Posterior cingulate gyrus (tissue), 11 donors: ENCODE measurements at regions of chr2 and their contacts with region 1.

Region 1: DNA sequence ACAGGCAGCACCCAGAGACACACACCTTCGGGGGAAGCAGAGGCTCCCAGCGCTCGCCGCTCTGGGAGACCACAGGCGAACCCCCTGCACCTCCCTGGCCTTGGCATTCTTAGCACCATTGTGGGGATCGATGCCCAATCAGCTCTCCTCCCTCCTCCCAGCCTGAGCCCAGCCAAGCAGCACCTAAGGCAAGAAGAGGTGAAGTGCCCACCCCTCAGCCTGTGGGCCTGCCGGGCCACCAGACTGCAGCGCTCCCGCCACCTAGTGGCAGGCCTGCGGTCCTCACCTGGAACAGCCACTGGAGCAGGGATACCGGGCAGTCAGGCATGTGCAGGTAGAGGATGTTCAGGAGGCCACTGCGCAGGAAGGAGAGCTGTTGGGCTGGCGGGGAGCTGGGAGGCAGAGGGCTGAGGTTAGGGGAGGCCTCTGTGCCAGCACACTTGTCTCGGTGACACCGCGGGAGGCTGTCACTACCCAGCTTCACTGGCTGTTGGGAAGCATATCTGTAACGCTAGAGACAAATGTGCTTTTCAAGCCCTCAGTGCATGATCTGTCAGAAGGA is 35.2 kb downstream of the FAM178B start:
- DNase-seq: peak; percentile 77 to 98 (median 88)

Region 2: DNA sequence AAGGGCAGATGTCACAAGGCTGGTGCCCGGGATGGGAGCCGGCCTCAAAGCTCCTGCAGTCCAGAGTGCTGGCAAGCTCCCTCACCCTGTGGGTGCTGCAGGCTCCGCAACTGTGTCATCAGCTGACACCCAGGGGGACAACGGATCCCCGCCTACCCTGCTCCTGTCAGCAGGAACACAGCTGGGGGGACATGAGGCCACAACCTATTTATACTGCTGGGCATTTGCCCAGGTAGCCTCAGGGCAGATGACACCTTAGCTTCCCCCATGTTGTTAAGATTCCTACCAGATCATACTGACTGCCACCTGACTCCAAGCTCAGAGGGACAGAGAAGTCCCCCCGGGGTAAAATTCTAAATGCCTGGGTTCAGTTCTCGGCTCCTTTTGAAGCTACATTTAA is 108.6 kb before region 1 on chr2:
- intact Hi-C with region 1: no loop called
- DNase-seq: peak in 1 of 10 donors; percentile 64

Region 3: GRCh38 chr2:96856776-96857673 is 94.1 kb before region 1 on chr2:
- intact Hi-C with region 1: loop called (anchors 1 kb)
- DNase-seq: peak in 1 of 10 donors; percentile 74